B cell (primary cell): ENCODE measurements at regions of chr1 and their contacts with region 1.

Region 1: DNA sequence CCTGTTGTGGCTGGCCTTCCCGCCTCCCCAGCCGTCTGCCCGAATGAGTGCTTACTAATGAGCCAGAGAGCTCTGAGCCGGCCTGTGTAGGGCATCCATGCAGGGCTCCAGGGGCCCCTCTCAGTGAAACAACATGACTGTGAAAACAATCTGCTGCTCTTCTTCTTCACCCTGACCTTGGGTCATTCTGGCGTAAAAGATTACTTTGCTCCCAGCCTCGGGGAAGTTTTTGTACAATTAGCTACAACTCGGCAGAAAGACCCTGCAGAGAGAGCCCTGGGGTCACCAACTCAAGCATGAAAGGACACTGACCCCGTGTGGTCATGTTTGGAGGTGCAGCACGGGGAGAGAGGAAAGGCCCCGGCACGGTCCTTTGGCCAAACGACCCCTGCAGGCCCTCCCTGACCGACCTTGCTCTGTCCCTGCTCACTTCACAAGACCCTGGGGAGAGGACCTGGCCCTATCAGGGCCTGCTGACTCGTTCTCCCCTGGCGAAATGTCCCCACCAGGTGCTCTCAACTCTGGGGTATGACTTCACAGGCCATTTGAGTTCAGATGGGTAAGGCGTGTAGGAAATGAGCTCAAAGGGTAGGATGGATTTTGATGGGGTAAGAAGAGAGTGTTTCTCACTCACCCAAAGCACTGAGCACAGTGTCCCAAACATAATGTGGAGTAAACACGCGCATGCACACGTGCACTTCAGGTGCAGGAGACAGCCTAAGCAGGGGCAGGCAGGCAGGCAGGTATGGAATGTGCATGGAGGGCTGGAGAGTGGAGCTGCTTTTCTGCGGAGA is 22.9 kb upstream of the FAM20B start:
- DNase-seq: peak; percentile 82
- ATAC-seq: peak; percentile 96
- H3K4me3 ChIP-seq: no peak overlapping the region
- H3K4me3 Mint-ChIP-seq: no peak overlapping the region
- H3K27ac ChIP-seq: no peak overlapping the region
- H3K27ac Mint-ChIP-seq: peak overlapping the region; percentile 10
- H3K4me1 ChIP-seq: peaks cover 7 to 22% of the 10 kb centered on the region in 2 donors
- H3K4me1 Mint-ChIP-seq: peaks cover 14% of the 10 kb centered on the region
- H3K27me3 ChIP-seq: no peaks in the 10 kb centered on the region
- H3K27me3 Mint-ChIP-seq: no peaks in the 10 kb centered on the region
- CTCF ChIP-seq: peak; percentile 97

Region 2: GRCh38 chr1:178300352-178300699 is 702.4 kb before region 1 on chr1:
- CTCF ChIA-PET with region 1: interaction called, 29 read pairs
- POLR2A ChIA-PET with region 1: no interaction called
- intact Hi-C with region 1: no loop called
- DNase-seq: no peak
- ATAC-seq: no peak
- H3K4me3 ChIP-seq: no peak overlapping the region
- H3K4me3 Mint-ChIP-seq: no peak overlapping the region
- H3K27ac ChIP-seq: no peak overlapping the region
- H3K27ac Mint-ChIP-seq: no peak overlapping the region
- H3K4me1 ChIP-seq: no peaks in the 10 kb centered on the region
- H3K4me1 Mint-ChIP-seq: no peaks in the 10 kb centered on the region
- H3K27me3 ChIP-seq: no peaks in the 10 kb centered on the region
- H3K27me3 Mint-ChIP-seq: peaks cover 15% of the 10 kb centered on the region
- CTCF ChIP-seq: no peak

Region 3: DNA sequence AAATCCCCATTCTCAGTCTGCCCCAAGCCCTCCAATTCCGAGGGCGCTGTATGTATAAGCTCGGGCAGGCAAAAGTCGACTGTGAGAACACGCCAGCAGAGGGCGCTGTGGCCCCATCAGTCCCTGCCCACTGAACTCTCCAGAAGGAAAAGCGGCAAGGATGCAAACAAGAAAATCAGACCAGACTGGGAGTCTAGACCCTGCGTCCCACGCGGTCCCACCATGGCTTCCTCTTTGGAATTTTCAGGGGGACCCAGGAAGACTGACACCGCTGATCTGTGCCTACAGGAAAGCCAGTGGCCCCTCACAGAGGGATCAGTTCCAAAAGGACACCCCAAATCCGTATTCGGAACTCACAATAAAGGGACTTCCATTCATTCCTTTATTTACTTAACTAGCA is 470.4 kb before region 1 on chr1:
- CTCF ChIA-PET with region 1: interaction called, 594 read pairs
- POLR2A ChIA-PET with region 1: interaction called, 4 read pairs
- intact Hi-C with region 1: loop called (anchors 1 kb)
- DNase-seq: peak; percentile 87
- ATAC-seq: peak; percentile 90
- H3K4me3 ChIP-seq: no peak overlapping the region
- H3K4me3 Mint-ChIP-seq: no peak overlapping the region
- H3K27ac ChIP-seq: no peak overlapping the region
- H3K27ac Mint-ChIP-seq: no peak overlapping the region
- H3K4me1 ChIP-seq: peaks cover 0 to 9% of the 10 kb centered on the region in 2 donors
- H3K4me1 Mint-ChIP-seq: peaks cover 4% of the 10 kb centered on the region
- H3K27me3 ChIP-seq: no peaks in the 10 kb centered on the region
- H3K27me3 Mint-ChIP-seq: no peaks in the 10 kb centered on the region
- CTCF ChIP-seq: peak; percentile 98

Region 4: DNA sequence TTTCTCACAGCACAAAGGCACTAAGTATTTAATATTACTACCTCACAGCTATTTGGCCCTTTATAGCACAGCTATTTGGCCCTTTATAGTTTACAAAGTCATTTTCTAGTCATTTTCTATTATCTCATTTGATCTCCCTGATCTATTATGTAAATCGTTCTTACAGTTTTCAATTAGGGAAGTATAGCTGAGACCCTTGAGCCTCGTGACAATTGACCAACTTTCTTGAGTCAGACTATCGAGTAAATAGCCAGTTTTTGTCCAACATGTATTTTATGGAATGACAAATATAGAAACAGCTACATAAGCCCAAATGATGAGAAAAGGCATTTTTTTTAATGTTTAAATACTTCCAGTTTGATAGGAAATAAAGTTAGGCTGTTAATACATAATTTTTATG is 124.9 kb before region 1 on chr1:
- CTCF ChIA-PET with region 1: interaction called, 16 read pairs
- POLR2A ChIA-PET with region 1: no interaction called
- intact Hi-C with region 1: no loop called
- DNase-seq: no peak
- ATAC-seq: no peak
- H3K4me3 ChIP-seq: no peak overlapping the region
- H3K4me3 Mint-ChIP-seq: no peak overlapping the region
- H3K27ac ChIP-seq: peak overlapping the region in 1 of 2 donors; percentile 35
- H3K27ac Mint-ChIP-seq: no peak overlapping the region
- H3K4me1 ChIP-seq: no peaks in the 10 kb centered on the region
- H3K4me1 Mint-ChIP-seq: peaks cover 9% of the 10 kb centered on the region
- H3K27me3 ChIP-seq: no peaks in the 10 kb centered on the region
- H3K27me3 Mint-ChIP-seq: no peaks in the 10 kb centered on the region
- CTCF ChIP-seq: no peak

Region 5: GRCh38 chr1:178931858-178932551 is 70.7 kb before region 1 on chr1:
- CTCF ChIA-PET with region 1: interaction called, 17 read pairs
- POLR2A ChIA-PET with region 1: no interaction called
- intact Hi-C with region 1: no loop called
- DNase-seq: no peak
- ATAC-seq: peak; percentile 53
- H3K4me3 ChIP-seq: no peak overlapping the region
- H3K4me3 Mint-ChIP-seq: no peak overlapping the region
- H3K27ac ChIP-seq: peak overlapping the region; percentile 26 to 58
- H3K27ac Mint-ChIP-seq: peak overlapping the region; percentile 76
- H3K4me1 ChIP-seq: peaks cover 24 to 35% of the 10 kb centered on the region in 2 donors
- H3K4me1 Mint-ChIP-seq: peaks cover 70% of the 10 kb centered on the region
- H3K27me3 ChIP-seq: no peaks in the 10 kb centered on the region
- H3K27me3 Mint-ChIP-seq: no peaks in the 10 kb centered on the region
- CTCF ChIP-seq: no peak

Region 6: DNA sequence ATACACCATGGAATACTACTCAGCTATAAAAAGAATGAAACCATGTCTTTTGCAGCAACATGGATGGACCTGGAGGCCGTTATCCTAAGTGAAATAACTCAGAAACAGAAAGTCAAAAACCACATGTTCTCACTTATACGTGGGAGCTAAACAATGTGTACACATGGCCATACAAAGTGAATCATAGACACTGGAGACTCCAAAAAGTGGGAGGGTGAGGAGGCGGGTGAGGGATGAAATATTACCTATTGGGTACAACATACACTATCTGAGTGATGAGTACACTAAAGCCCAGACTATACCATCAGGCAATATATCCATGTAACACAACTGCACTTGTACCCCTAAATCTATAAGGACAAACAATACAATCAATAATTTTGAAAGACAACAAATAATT is 16.5 kb before region 1 on chr1:
- CTCF ChIA-PET with region 1: no interaction called
- POLR2A ChIA-PET with region 1: no interaction called
- intact Hi-C with region 1: no loop called
- DNase-seq: no peak
- ATAC-seq: no peak
- H3K4me3 ChIP-seq: no peak overlapping the region
- H3K4me3 Mint-ChIP-seq: no peak overlapping the region
- H3K27ac ChIP-seq: no peak overlapping the region
- H3K27ac Mint-ChIP-seq: no peak overlapping the region
- H3K4me1 ChIP-seq: no peaks in the 10 kb centered on the region
- H3K4me1 Mint-ChIP-seq: no peaks in the 10 kb centered on the region
- H3K27me3 ChIP-seq: no peaks in the 10 kb centered on the region
- H3K27me3 Mint-ChIP-seq: no peaks in the 10 kb centered on the region
- CTCF ChIP-seq: no peak

Region 7: DNA sequence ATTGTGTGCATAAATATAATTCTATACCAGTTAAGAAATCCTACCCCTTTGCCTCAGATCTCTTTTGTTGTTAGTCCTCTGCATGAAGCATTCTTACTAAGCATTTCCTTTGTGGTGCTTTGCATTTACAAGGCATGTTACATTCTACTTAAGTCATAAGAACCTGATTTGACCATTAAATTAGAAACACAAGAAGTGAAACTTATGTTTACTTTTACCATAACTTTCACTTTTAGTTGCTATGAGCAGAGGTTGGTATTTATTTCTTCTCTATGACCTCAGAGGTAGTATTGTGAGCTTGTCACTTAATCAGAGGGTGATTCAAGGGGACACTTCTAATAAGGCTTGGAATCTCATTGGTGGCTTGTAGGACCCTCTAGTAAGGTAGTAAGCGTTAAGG is 32.0 kb after region 1 on chr1:
- CTCF ChIA-PET with region 1: interaction called, 11 read pairs
- POLR2A ChIA-PET with region 1: no interaction called
- intact Hi-C with region 1: no loop called
- DNase-seq: peak; percentile 70
- ATAC-seq: peak; percentile 84
- H3K4me3 ChIP-seq: peak overlapping the region in 2 of 5 experiments; percentile 2 to 8
- H3K4me3 Mint-ChIP-seq: peak overlapping the region; percentile 83
- H3K27ac ChIP-seq: peak overlapping the region; percentile 58 to 77
- H3K27ac Mint-ChIP-seq: peak overlapping the region; percentile 94
- H3K4me1 ChIP-seq: peaks cover 48 to 51% of the 10 kb centered on the region in 2 donors
- H3K4me1 Mint-ChIP-seq: peaks cover 86% of the 10 kb centered on the region
- H3K27me3 ChIP-seq: no peaks in the 10 kb centered on the region
- H3K27me3 Mint-ChIP-seq: no peaks in the 10 kb centered on the region
- CTCF ChIP-seq: no peak

Region 8: GRCh38 chr1:179121159-179121938 is 118.6 kb after region 1 on chr1:
- CTCF ChIA-PET with region 1: no interaction called
- POLR2A ChIA-PET with region 1: no interaction called
- intact Hi-C with region 1: no loop called
- DNase-seq: peak; percentile 48
- ATAC-seq: no peak
- H3K4me3 ChIP-seq: no peak overlapping the region
- H3K4me3 Mint-ChIP-seq: no peak overlapping the region
- H3K27ac ChIP-seq: no peak overlapping the region
- H3K27ac Mint-ChIP-seq: peak overlapping the region; percentile 6
- H3K4me1 ChIP-seq: no peaks in the 10 kb centered on the region
- H3K4me1 Mint-ChIP-seq: peaks cover 5% of the 10 kb centered on the region
- H3K27me3 ChIP-seq: no peaks in the 10 kb centered on the region
- H3K27me3 Mint-ChIP-seq: no peaks in the 10 kb centered on the region
- CTCF ChIP-seq: peak; percentile 55